Activated T-helper 2 cell treated with anti-CD3 and anti-CD28 coated beads, Interferon-gamma antibody, Interleukin-2, Interleukin-4, amounts not matched to agents 10 μg/mL and 5 μg/mL and 100 μg/mL, durations not matched to agents 14 hours and 24 hours and 36 hours (primary cell): ENCODE measurements at regions of chr7 and their contacts with region 1.

Region 1: GRCh38 chr7:12257582-12257981 is 46.5 kb downstream of the TMEM106B start:
- DNase-seq: peak; percentile 43
- H3K4me3 Mint-ChIP-seq: no peak overlapping the region
- H3K27ac Mint-ChIP-seq: no peak overlapping the region
- H3K4me1 Mint-ChIP-seq: peaks cover 12% of the 10 kb centered on the region
- H3K27me3 Mint-ChIP-seq: peaks cover 15% of the 10 kb centered on the region

Region 2: GRCh38 chr7:12139409-12139808 is 118.2 kb before region 1 on chr7:
- intact Hi-C with region 1: loop called (anchors 5 kb)
- DNase-seq: no peak
- H3K4me3 Mint-ChIP-seq: no peak overlapping the region
- H3K27ac Mint-ChIP-seq: no peak overlapping the region
- H3K4me1 Mint-ChIP-seq: peaks cover 15% of the 10 kb centered on the region
- H3K27me3 Mint-ChIP-seq: peaks cover 7% of the 10 kb centered on the region

Region 3: GRCh38 chr7:12211054-12211710 is 46.4 kb before region 1 on chr7 and contains the start of gene TMEM106B:
- intact Hi-C with region 1: loop called (anchors 1 kb)
- DNase-seq: peak; percentile 95
- H3K4me3 Mint-ChIP-seq: peak within 1 kb of the TSS; percentile 97
- H3K27ac Mint-ChIP-seq: peak within 1 kb of the TSS; percentile 90
- H3K4me1 Mint-ChIP-seq: peaks cover 31% of the 10 kb centered on the region
- H3K27me3 Mint-ChIP-seq: peaks cover 13% of the 10 kb centered on the region
- total RNA-seq, gene TMEM106B: 23.9 and 24.1 TPM in 2 replicates

Region 4: DNA sequence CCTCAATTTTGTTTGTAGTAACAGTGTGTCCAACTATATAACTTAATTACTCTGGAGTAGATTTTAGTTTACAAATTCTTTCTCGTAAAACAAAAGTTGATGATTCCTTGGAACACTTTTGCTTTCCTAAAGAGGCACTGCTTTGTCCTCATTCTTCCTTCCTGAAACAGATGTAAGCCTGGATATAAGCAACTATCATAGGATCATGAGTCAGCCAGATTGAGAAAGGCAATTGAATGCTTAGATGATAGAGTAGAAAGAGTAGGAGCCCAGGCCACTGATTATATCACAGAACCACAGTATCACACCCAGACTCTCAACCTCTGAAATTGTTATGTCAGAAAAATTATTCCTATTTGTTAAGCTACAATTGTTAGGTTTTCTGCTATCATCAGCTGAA is 23.5 kb after region 1 on chr7:
- intact Hi-C with region 1: loop called (anchors 2 kb)
- DNase-seq: no peak
- H3K4me3 Mint-ChIP-seq: no peak overlapping the region
- H3K27ac Mint-ChIP-seq: no peak overlapping the region
- H3K4me1 Mint-ChIP-seq: peaks cover 10% of the 10 kb centered on the region
- H3K27me3 Mint-ChIP-seq: peaks cover 21% of the 10 kb centered on the region

Region 5: DNA sequence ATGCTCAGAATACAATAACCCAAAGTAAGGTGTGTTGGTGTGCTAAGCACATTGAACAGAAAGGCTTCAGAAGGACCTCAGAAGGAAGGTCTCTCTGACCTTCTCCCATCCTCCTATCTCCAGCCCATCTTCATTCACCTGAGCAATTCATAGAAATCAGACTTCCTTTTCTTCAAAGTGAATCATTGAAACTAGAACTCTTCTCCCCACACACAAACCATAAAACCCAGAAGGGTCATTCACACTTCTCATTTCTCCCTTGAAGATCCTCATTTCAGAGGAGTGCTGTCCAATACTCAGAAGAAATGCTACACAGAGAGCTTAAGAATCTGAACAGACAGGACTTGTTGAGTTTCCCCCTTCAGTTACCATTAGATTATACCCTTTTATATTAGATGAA is 56.6 kb after region 1 on chr7:
- intact Hi-C with region 1: loop called (anchors 5 kb)
- DNase-seq: no peak
- H3K4me3 Mint-ChIP-seq: no peak overlapping the region
- H3K27ac Mint-ChIP-seq: no peak overlapping the region
- H3K4me1 Mint-ChIP-seq: peaks cover 6% of the 10 kb centered on the region
- H3K27me3 Mint-ChIP-seq: peaks cover 16% of the 10 kb centered on the region

Region 6: DNA sequence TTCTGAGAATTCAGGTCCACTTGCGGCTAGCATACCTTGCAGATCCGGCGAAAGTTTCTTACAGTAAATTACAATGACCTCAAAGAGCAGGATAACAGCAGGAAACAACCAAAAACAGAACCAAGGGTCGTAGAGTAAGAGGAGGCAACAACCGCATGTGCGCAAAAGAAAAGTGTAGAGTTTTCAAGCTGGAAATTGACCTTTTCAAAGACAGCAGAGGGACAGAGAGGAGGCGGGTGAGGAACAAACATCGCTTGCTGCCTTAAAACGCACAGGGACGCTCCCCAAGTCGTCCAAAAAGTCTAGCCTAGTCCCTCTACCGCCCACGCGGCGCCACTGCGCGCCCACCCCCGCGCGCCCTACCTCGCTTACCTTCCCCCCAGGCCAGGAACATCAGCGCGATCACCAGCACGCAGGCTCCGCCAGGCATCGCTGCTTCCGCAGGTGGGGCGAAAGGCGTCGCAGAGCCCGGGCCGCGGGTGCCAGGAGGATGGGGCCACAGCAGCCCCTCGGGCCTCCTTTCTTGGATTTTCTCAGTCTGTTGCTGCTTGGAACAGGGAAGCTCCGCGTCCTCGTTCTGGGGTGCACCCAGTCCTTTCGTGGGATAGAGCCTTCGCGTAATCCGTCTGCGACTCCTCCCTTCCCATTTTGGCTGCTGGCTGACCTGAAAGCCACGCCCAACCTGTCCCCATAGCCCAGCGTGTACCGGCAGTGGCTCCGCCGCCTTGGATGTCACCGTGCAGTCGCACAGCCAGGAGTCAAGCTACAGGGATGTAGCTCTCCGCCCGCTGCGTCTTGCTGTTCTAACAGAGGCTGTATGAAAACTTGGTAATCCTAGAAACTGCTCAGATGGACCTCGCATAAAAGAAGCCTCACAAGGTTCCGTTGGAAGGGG is 146.0 kb after region 1 on chr7 and contains the start of gene VWDE:
- intact Hi-C with region 1: loop called (anchors 5 kb)
- DNase-seq: peak; percentile 52
- H3K4me3 Mint-ChIP-seq: peak within 1 kb of the TSS; percentile 79
- H3K27ac Mint-ChIP-seq: peak within 1 kb of the TSS; percentile 81
- H3K4me1 Mint-ChIP-seq: peaks cover 20% of the 10 kb centered on the region
- H3K27me3 Mint-ChIP-seq: peaks cover 24% of the 10 kb centered on the region
- total RNA-seq, gene VWDE: 2.9 and 3.2 TPM in 2 replicates